Thyroid gland (tissue), 4 donors: ENCODE measurements at regions of chr9 and their contacts with region 1.

Region 1: DNA sequence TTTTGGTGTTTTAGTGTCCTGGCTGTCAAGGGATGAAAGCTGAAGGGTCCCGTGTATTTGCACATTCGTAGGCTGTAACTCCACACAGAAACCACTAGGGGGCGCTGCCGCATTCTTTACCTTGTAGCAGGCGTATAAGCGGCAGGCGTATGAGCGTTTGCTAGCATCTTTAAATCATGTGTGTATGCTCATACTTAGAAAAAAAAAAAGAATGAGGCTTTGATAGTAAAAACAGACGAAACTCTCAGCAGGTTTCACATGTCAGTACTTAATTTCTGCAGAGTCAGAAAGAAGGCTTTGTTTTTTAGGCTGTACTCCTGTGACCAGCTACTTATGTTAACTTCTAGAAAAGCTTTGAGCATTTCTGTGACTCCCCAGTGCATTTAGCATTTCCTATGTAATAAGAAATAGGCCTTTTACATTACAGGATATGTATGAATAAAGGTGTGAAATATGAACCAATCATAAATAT is 218.8 kb upstream of the ADAMTSL1 start:
- DNase-seq: peak; percentile 74 to 88
- H3K4me3 ChIP-seq: no peak overlapping the region
- H3K27ac ChIP-seq: no peak overlapping the region
- H3K4me1 ChIP-seq: peaks cover 3 to 4% of the 10 kb centered on the region in 2 donors
- H3K27me3 ChIP-seq: no peaks in the 10 kb centered on the region
- CTCF ChIP-seq: peak; percentile 87 to 97 (median 93)
- POLR2A ChIP-seq: no peak

Region 2: GRCh38 chr9:18442629-18443491 is 187.7 kb after region 1 on chr9:
- intact Hi-C with region 1: loop called (anchors 5 kb)
- DNase-seq: peak; percentile 76 to 83
- H3K4me3 ChIP-seq: no peak overlapping the region
- H3K27ac ChIP-seq: no peak overlapping the region
- H3K4me1 ChIP-seq: peaks cover 0 to 12% of the 10 kb centered on the region in 2 donors
- H3K27me3 ChIP-seq: no peaks in the 10 kb centered on the region
- CTCF ChIP-seq: peak; percentile 75 to 92 (median 84)
- POLR2A ChIP-seq: no peak